ENCODE measurements at regions of chr16 and their contacts with region 1.

Region 1: DNA sequence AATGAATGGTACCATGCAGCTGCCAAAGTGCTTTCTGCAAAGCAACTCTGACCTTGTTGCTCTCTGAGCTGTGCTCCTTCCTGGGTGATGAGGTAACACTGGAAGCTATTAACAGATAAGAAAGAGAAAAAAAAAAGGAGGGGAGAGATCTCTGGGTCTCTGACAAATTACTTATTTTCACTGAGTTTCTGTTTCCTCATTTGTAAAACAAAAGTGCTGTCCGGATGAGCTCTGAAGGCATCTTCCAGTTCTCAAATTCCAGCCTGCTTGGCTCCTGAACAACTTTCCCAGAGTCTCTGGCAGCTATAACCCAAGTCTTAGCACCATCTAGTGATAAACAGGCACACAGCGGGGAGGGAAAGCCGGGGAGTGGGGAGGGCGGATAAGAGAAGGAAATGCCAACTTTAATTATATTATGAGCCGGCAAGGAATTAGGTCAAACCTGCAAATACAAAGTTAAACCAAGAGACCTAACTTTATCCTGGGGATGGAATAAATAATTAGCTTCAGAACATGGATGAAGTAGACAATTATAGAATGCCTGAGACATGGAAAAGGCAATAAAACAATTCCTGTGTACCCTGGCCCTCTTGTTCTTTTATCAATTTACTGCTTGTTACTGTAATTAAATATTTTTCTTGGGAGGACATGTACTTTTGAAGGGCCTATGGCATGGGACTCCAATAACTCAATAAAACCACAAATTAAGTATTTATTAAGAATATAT is 61.3 kb upstream of the KIFC3 start:
- DNase-seq: peak; percentile 16 to 94 (median 52)

Region 2: DNA sequence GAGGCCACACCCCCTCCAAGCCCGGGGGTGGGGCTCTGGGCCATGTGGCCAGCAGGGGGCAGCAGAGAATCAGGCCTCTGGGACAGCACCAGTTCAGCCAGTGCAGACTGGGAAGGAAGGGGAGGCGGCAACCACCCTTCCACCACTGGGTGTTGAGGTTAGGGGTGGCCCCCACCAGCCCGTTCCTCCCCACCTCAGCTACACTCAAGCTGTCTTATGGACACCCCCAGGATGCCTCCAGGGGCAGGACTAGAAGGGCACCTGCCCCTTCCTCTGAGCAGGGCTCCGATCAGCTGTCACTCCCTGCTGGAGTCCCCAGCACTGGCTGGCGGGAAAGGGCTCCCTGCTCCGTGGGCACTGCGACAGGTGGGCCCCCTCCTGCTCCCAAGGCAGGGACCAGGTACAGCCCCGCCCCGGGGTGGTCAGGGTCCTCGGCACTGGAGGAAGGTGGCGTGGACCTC is 106.2 kb before region 1 on chr16:
- intact Hi-C with region 1: loop called (anchors 1 kb)
- DNase-seq: peak; percentile 73 to 98 (median 92)

Region 3: GRCh38 chr16:57775661-57776469 is 87.7 kb before region 1 on chr16:
- intact Hi-C with region 1: loop called (anchors 1 kb)
- DNase-seq: peak in 8 of 10 donors; percentile 49 to 94 (median 71)

Region 4: GRCh38 chr16:57802341-57803133 is 61.1 kb before region 1 on chr16 and contains the start of gene KIFC3:
- intact Hi-C with region 1: loop called (anchors 2 kb)
- DNase-seq: peak; percentile 79 to 98 (median 88)

Measured in posterior cingulate gyrus (tissue), 11 donors.